ENCODE measurements at regions of chr3 and their contacts with region 1.

Region 1: DNA sequence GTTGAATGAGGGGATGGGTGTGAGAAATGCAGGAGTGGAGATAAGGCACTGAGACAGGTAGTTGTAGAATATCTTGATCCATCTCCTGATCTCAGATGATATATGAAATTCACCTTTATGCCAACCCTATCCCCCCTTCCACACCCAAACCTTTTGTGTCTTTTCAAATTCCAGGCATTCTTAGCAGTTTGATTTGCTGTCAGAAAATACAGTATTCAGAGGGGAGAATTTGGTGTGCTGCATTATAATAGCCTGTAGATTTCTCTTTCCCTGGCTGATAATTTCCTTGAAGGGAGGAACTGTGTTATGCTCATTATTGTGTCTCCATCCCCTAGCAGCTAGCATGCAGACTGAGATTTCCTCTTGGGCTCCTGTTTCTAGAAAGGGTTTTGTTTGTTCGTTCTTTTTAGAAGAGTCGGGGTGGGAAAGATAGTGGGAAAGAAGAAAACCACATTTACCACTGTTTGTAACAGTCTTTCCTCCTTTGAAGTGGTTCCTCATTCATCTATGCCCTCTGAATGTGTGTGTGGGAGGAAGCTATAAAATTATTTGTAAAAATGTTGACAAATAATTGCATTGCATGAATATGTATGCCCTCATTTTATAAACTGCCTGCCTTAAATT is 373.4 kb downstream of the DIPK2A start:
- DNase-seq: no peak
- ATAC-seq: no peak
- H3K4me3 ChIP-seq: no peak overlapping the region
- H3K27ac ChIP-seq: no peak overlapping the region
- H3K4me1 ChIP-seq: no peaks in the 10 kb centered on the region
- H3K27me3 ChIP-seq: no peaks in the 10 kb centered on the region
- CTCF ChIP-seq: no peak

Region 2: GRCh38 chr3:143951351-143951971 is 393.6 kb before region 1 on chr3:
- CTCF ChIA-PET with region 1: no interaction called
- POLR2A ChIA-PET with region 1: no interaction called
- intact Hi-C with region 1: no loop called
- DNase-seq: peak; percentile 54
- ATAC-seq: no peak
- H3K4me3 ChIP-seq: no peak overlapping the region
- H3K27ac ChIP-seq: no peak overlapping the region
- H3K4me1 ChIP-seq: no peaks in the 10 kb centered on the region
- H3K27me3 ChIP-seq: no peaks in the 10 kb centered on the region
- CTCF ChIP-seq: peak; percentile 75

Region 3: DNA sequence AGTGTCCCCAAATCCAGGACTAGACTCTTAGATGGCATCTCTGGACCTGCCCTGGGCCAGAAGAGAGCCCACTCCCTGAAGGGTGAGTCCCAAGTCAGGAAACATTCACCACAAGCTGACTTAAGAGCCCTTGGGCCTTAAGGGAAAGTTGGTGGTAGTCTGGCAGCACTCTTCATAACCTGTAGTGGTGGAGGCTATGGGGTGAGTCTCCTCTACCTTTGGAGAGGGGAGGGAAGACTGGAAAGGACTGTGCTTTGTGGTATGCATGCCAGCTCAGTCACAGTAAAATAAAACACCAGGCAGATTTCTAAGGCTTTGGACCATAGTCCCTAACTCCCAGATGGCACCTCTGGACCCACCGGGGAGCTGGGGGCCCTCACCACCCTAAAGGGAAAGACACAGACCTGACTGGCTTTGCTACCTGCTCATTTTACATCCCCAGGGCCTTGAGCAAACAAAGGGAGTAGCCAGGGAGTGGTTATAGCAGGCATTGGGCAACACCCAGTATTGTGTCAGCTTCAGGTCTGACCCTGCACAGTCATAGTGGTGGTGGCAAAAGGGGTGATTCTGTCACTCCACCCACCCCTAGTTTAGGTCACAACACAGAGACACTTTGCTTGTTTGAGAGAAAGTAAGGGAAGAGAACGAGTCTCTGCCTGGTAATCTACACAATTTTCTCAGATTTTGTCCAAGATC is 21.1 kb before region 1 on chr3:
- CTCF ChIA-PET with region 1: no interaction called
- POLR2A ChIA-PET with region 1: interaction called, 20 read pairs
- intact Hi-C with region 1: no loop called
- DNase-seq: peak; percentile 68
- ATAC-seq: peak; percentile 90
- H3K4me3 ChIP-seq: no peak overlapping the region
- H3K27ac ChIP-seq: peak overlapping the region; percentile 49
- H3K4me1 ChIP-seq: peaks cover 12% of the 10 kb centered on the region
- H3K27me3 ChIP-seq: no peaks in the 10 kb centered on the region
- CTCF ChIP-seq: no peak

Measured in PC-3 (cell line).